Gastrocnemius medialis (tissue), 4 donors: ENCODE measurements at regions of chr1 and their contacts with region 1.

Region 1: GRCh38 chr1:114677691-114678090 is 7.8 kb upstream of the DENND2C start:
- DNase-seq: no peak
- ATAC-seq: no peak
- H3K4me3 ChIP-seq: no peak overlapping the region
- H3K27ac ChIP-seq: peak overlapping the region; percentile 88 to 100 (median 94)
- H3K4me1 ChIP-seq: peaks cover 0 to 25% of the 10 kb centered on the region in 2 donors
- H3K27me3 ChIP-seq: no peaks in the 10 kb centered on the region
- CTCF ChIP-seq: no peak
- POLR2A ChIP-seq: no peak

Region 2: GRCh38 chr1:114620419-114620818 is 57.3 kb before region 1 on chr1:
- in situ Hi-C with region 1: no loop called
- intact Hi-C with region 1: no loop called
- DNase-seq: no peak
- ATAC-seq: no peak
- H3K4me3 ChIP-seq: no peak overlapping the region
- H3K27ac ChIP-seq: no peak overlapping the region
- H3K4me1 ChIP-seq: no peaks in the 10 kb centered on the region
- H3K27me3 ChIP-seq: no peaks in the 10 kb centered on the region
- CTCF ChIP-seq: no peak
- POLR2A ChIP-seq: no peak

Region 3: GRCh38 chr1:114750780-114751179 is 73.1 kb after region 1 on chr1:
- in situ Hi-C with region 1: loop called in 2 of 4 experiments (anchors 5 to 10 kb)
- intact Hi-C with region 1: no loop called
- DNase-seq: peak; percentile 68 to 72
- ATAC-seq: peak; percentile 90 to 92
- H3K4me3 ChIP-seq: peak overlapping the region; percentile 2 to 11 (median 8)
- H3K27ac ChIP-seq: peak overlapping the region; percentile 97 to 100 (median 98)
- H3K4me1 ChIP-seq: peaks cover 95 to 96% of the 10 kb centered on the region in 2 donors
- H3K27me3 ChIP-seq: no peaks in the 10 kb centered on the region
- CTCF ChIP-seq: no peak
- POLR2A ChIP-seq: peak in 1 of 2 donors; percentile 55

Region 4: GRCh38 chr1:114868766-114869165 is 191.1 kb after region 1 on chr1:
- in situ Hi-C with region 1: no loop called
- intact Hi-C with region 1: no loop called
- DNase-seq: no peak
- ATAC-seq: no peak
- H3K4me3 ChIP-seq: no peak overlapping the region
- H3K27ac ChIP-seq: no peak overlapping the region
- H3K4me1 ChIP-seq: no peaks in the 10 kb centered on the region
- H3K27me3 ChIP-seq: no peaks in the 10 kb centered on the region
- CTCF ChIP-seq: no peak
- POLR2A ChIP-seq: no peak

Region 5: GRCh38 chr1:115237507-115237906 is 559.8 kb after region 1 on chr1:
- in situ Hi-C with region 1: no loop called
- intact Hi-C with region 1: no loop called
- DNase-seq: no peak
- ATAC-seq: no peak
- H3K4me3 ChIP-seq: no peak overlapping the region
- H3K27ac ChIP-seq: no peak overlapping the region
- H3K4me1 ChIP-seq: no peaks in the 10 kb centered on the region
- H3K27me3 ChIP-seq: no peaks in the 10 kb centered on the region
- CTCF ChIP-seq: no peak
- POLR2A ChIP-seq: no peak